ENCODE measurements at regions of chr2 and their contacts with region 1.

Region 1: GRCh38 chr2:177325270-177325929 is 60.9 kb upstream of the NFE2L2 start:
- DNase-seq: no peak
- ATAC-seq: no peak
- H3K4me3 ChIP-seq: no peak overlapping the region
- H3K27ac ChIP-seq: no peak overlapping the region
- H3K4me1 ChIP-seq: no peaks in the 10 kb centered on the region
- H3K27me3 ChIP-seq: no peaks in the 10 kb centered on the region
- CTCF ChIP-seq: no peak

Region 2: DNA sequence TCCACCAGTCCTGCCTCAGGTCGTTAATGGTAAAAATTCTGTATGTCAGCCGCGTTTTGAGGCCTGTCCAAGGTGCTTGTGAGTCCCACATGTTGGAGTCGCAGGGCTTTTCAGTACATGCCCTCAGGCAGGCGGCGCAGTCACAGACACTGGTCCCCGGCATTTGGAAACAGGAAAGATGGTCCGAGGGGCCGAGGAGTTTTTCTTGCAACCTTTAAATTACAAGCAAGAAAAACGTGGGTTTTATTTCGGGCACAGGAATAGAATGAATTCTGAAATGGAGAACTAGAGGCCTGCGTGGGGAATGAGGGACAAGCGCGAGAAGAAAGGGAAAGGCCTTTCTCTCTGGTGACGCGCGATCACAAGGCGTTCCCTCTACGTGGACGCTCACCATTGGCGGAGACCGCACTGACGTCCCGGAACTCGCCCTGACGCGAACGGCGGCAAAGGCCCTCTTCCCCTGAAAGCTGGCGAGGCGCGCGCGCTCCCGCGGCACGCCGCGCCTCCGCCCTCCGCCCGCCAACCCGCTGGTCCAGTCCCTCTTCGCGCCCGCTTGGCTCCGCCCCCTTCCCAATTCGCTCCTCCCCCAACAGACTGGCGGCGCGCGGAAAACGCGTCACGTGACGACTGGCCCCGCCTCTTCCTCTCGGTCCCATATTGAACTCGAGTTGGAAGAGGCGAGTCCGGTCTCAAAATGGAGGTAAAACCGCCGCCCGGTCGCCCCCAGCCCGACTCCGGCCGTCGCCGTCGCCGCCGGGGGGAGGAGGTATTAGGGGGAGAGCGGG is 113.1 kb before region 1 on chr2 and contains the start of gene HNRNPA3:
- intact Hi-C with region 1: no loop called
- DNase-seq: peak; percentile 99 to 100
- ATAC-seq: peak; percentile 91 to 94 (median 93)
- H3K4me3 ChIP-seq: peak within 1 kb of the TSS; percentile 83
- H3K27ac ChIP-seq: peak within 1 kb of the TSS; percentile 95
- H3K4me1 ChIP-seq: peaks cover 41% of the 10 kb centered on the region
- H3K27me3 ChIP-seq: no peaks in the 10 kb centered on the region
- CTCF ChIP-seq: no peak
- total RNA-seq, gene HNRNPA3: 72.8 to 125 (median 91.0) TPM

Region 3: GRCh38 chr2:177281400-177282180 is 43.8 kb before region 1 on chr2:
- intact Hi-C with region 1: loop called in 1 of 2 experiments (anchors 5 kb)
- DNase-seq: no peak
- ATAC-seq: peak; percentile 12 to 91 (median 58)
- H3K4me3 ChIP-seq: no peak overlapping the region
- H3K27ac ChIP-seq: peak overlapping the region; percentile 62
- H3K4me1 ChIP-seq: peaks cover 28% of the 10 kb centered on the region
- H3K27me3 ChIP-seq: no peaks in the 10 kb centered on the region
- CTCF ChIP-seq: no peak

Region 4: GRCh38 chr2:177348733-177349693 is 23.6 kb after region 1 on chr2:
- intact Hi-C with region 1: no loop called
- DNase-seq: no peak
- ATAC-seq: no peak
- H3K4me3 ChIP-seq: no peak overlapping the region
- H3K27ac ChIP-seq: no peak overlapping the region
- H3K4me1 ChIP-seq: no peaks in the 10 kb centered on the region
- H3K27me3 ChIP-seq: no peaks in the 10 kb centered on the region
- CTCF ChIP-seq: no peak

Region 5: DNA sequence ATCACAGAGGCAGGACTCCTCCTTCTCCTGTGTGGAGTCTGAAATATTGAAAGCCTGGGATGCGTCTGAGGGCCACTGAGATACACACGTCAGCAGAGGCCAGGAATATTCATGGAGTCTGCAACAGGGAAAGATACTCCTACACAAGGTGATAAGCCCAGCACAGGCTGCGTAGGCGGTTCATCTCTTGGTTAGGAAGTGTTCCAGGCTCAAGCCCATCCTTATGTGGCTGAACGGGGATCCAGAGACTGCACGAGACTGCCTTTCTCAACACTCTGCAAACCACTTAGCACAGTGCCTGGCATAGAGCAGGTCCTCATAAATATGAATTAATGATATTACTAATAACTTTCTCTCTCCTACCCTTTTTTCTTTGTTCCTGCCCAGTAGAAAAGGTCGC is 37.9 kb after region 1 on chr2:
- intact Hi-C with region 1: no loop called
- DNase-seq: no peak
- ATAC-seq: no peak
- H3K4me3 ChIP-seq: no peak overlapping the region
- H3K27ac ChIP-seq: no peak overlapping the region
- H3K4me1 ChIP-seq: peaks cover 8% of the 10 kb centered on the region
- H3K27me3 ChIP-seq: no peaks in the 10 kb centered on the region
- CTCF ChIP-seq: no peak